ENCODE measurements at regions of chr2 and their contacts with region 1.

Region 1: GRCh38 chr2:24652265-24653182 is 140.7 kb downstream of the PTRHD1 start:
- DNase-seq: no peak
- ATAC-seq: peak; percentile 52
- H3K4me3 Mint-ChIP-seq: no peak overlapping the region
- H3K27ac Mint-ChIP-seq: peak overlapping the region; percentile 78
- H3K4me1 Mint-ChIP-seq: peaks cover 39% of the 10 kb centered on the region
- H3K27me3 Mint-ChIP-seq: no peaks in the 10 kb centered on the region
- CTCF ChIP-seq: no peak

Region 2: GRCh38 chr2:24527536-24527935 is 125.0 kb before region 1 on chr2:
- CTCF ChIA-PET with region 1: no interaction called
- POLR2A ChIA-PET with region 1: interaction called, 12 read pairs
- intact Hi-C with region 1: no loop called
- DNase-seq: no peak
- ATAC-seq: no peak
- H3K4me3 Mint-ChIP-seq: no peak overlapping the region
- H3K27ac Mint-ChIP-seq: no peak overlapping the region
- H3K4me1 Mint-ChIP-seq: peaks cover 22% of the 10 kb centered on the region
- H3K27me3 Mint-ChIP-seq: no peaks in the 10 kb centered on the region
- CTCF ChIP-seq: no peak

Region 3: DNA sequence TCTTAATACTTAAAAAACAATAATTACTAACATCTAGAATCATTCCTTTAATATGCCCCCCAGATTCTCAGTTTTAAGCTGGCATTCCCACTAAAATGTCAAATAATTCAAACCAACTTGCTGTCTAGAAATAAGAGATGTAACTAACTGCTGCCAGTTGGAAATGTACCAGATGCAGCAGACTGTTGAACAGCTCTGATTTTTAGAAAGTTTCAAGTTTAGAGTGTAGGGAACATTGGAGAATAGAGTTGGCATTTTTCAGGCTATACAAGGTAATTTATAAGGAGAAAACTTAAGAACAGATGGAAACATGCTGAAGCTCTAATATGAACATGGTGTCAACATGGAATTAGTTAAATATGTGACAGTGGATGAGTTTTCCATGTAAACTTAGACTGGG is 39.3 kb after region 1 on chr2:
- CTCF ChIA-PET with region 1: no interaction called
- POLR2A ChIA-PET with region 1: no interaction called
- intact Hi-C with region 1: no loop called
- DNase-seq: no peak
- ATAC-seq: no peak
- H3K4me3 Mint-ChIP-seq: no peak overlapping the region
- H3K27ac Mint-ChIP-seq: no peak overlapping the region
- H3K4me1 Mint-ChIP-seq: no peaks in the 10 kb centered on the region
- H3K27me3 Mint-ChIP-seq: no peaks in the 10 kb centered on the region
- CTCF ChIP-seq: no peak

Measured in activated B cell treated with CpG ODN at 0.5 μM for 24 hours (primary cell).